ENCODE measurements at regions of chr2 and their contacts with region 1.

Region 1: DNA sequence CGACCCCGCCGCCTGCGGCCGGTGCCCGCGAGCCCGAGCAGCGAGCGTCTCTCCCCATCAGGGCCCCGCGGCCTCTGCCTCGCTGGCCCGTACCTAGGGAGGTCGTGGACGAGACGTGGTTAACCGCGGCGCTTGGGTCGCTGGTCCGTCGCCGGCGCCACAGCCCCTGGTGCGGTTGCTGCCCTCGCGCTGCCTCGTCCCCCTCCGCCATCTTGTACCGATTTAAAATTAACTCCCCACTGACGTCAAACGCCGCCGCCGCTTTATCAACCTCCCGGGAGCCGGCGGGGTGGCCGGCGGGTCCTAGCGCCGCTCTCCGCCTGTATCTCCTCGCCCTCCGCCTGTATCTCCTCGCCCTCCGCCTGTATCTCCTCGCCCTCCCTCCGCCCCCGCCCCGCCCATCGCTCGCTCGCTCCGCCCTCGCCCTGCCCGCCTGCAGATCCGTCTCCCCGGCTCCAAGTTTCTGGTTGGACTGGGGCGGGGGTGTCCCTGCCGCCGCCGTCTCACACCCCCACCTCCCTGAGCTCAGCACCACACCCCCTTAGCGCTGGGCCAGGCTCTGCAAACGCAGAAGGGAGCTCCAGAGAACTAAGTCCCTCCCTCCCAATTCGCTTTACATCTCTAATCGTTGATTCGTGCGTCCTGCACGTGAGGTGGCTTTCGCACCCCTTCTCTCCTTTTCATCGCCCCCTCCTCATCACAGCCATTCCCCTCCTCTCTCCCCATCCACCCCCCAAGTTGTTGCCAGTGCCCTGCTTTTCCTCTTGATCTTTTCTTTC is at the start of gene ATL2:
- DNase-seq: peak; percentile 97 to 98
- H3K4me3 ChIP-seq: peak within 1 kb of the TSS; percentile 80 to 86
- H3K27ac ChIP-seq: peak within 1 kb of the TSS; percentile 99
- H3K4me1 ChIP-seq: no peaks in the 10 kb centered on the region
- H3K27me3 ChIP-seq: no peaks in the 10 kb centered on the region
- CTCF ChIP-seq: peak in 1 of 4 experiments; percentile 12
- POLR2A ChIP-seq: peak; percentile 96 to 98
- total RNA-seq, gene ATL2: 90.9 to 404 (median 140) TPM

Region 2: GRCh38 chr2:38508311-38509039 is 131.2 kb after region 1 on chr2:
- intact Hi-C with region 1: loop called (anchors 10 kb)
- DNase-seq: peak; percentile 89 to 91
- H3K4me3 ChIP-seq: no peak overlapping the region
- H3K27ac ChIP-seq: peak overlapping the region; percentile 88 to 91
- H3K4me1 ChIP-seq: peaks cover 7 to 10% of the 10 kb centered on the region in 2 donors
- H3K27me3 ChIP-seq: no peaks in the 10 kb centered on the region
- CTCF ChIP-seq: peak in 2 of 4 experiments; percentile 19 to 25
- POLR2A ChIP-seq: no peak